ENCODE measurements at regions of chr2 and their contacts with region 1.

Region 1: GRCh38 chr2:124804014-124804940 is 779.2 kb downstream of the CNTNAP5 start:
- DNase-seq: peak; percentile 52
- H3K4me3 ChIP-seq: no peak overlapping the region
- H3K27ac ChIP-seq: peak overlapping the region; percentile 68
- H3K4me1 ChIP-seq: no peaks in the 10 kb centered on the region
- H3K27me3 ChIP-seq: no peaks in the 10 kb centered on the region
- CTCF ChIP-seq: peak; percentile 35

Region 2: DNA sequence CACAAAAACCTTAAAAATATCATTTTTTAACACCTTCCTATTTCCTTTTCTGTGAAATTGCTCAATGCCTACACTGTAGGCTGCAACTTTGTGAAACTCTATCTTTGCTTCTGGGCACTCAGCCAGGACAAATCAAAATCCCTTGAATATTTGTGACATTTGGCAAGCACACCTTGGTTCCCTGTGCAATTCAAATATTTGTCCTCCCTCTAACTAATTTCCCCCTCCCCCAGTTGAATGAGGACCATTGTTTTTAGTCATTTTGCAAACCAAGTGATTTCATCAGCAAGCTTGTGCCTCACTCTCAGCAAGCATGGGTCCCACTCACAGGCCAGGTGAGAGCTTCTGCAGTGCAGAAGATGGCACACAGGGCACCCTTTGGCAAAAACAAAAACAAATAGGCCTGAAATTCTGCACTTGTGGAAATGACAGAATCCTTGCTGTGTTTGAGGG is 237.7 kb before region 1 on chr2:
- intact Hi-C with region 1: loop called (anchors 10 kb)
- DNase-seq: peak; percentile 48
- H3K4me3 ChIP-seq: no peak overlapping the region
- H3K27ac ChIP-seq: no peak overlapping the region
- H3K4me1 ChIP-seq: no peaks in the 10 kb centered on the region
- H3K27me3 ChIP-seq: no peaks in the 10 kb centered on the region
- CTCF ChIP-seq: no peak

Region 3: GRCh38 chr2:124589971-124590370 is 214.3 kb before region 1 on chr2:
- intact Hi-C with region 1: loop called (anchors 5 kb)
- DNase-seq: no peak
- H3K4me3 ChIP-seq: no peak overlapping the region
- H3K27ac ChIP-seq: no peak overlapping the region
- H3K4me1 ChIP-seq: peaks cover 4% of the 10 kb centered on the region
- H3K27me3 ChIP-seq: no peaks in the 10 kb centered on the region
- CTCF ChIP-seq: no peak

Measured in colonic mucosa (tissue), 4 donors.